ENCODE measurements at regions of chr17 and their contacts with region 1.

Region 1: DNA sequence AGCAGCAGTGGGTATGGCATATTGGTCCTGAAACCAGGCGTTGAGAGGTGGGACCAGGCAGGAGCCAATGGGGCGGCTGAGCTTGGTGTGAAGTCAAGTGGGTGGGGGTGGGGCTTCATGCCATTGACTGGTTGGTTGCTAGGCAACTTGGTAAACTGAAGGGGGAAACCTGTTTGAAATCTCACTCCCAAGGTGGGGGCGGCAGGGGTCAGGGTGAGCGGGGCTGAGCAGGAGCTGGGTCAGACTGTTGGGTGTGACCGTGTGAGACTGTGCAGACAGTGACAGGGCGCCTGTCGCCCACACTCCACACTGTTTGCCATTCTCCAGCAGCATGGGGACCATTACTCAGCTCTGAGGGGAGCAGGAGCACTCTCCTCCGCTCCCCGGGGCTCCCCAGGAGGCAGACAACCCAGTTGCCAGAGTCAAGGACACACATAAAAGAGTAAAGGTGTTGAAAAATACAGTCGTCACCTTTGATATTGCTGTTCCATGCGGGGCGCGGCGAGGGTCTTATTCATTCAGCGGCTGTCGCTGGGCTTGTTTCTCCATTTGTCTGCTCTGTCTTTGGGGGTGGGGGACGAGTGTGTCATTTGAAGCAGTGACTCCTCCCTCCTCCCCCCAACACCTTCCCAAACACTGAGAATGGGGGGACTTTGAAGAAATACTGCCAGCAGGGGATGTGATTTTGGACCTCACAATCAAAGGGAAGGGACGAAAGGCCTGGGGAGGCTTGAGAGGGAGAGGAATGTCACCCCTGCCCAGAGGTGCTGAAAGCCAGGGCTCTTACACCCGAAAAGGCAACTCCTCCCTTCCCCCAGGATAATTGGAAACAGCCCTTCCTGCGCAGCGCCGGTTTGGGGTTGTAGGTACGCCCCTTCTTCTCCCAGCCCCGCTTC is 1.2 kb upstream of the EFNB3 start:
- DNase-seq: peak in 2 of 7 donors; percentile 3 to 72
- H3K4me3 ChIP-seq: no peak overlapping the region
- H3K27ac ChIP-seq: no peak overlapping the region
- H3K4me1 ChIP-seq: peaks cover 9 to 11% of the 10 kb centered on the region in 2 donors
- H3K27me3 ChIP-seq: peaks cover 17% of the 10 kb centered on the region
- CTCF ChIP-seq: no peak
- POLR2A ChIP-seq: no peak

Region 2: GRCh38 chr17:7740481-7741001 is 36.7 kb after region 1 on chr17:
- intact Hi-C with region 1: no loop called
- DNase-seq: peak in 3 of 7 donors; percentile 14 to 32 (median 32)
- H3K4me3 ChIP-seq: no peak overlapping the region
- H3K27ac ChIP-seq: no peak overlapping the region
- H3K4me1 ChIP-seq: no peaks in the 10 kb centered on the region
- H3K27me3 ChIP-seq: peaks cover 10% of the 10 kb centered on the region
- CTCF ChIP-seq: no peak
- POLR2A ChIP-seq: no peak

Region 3: GRCh38 chr17:7774037-7774659 is 70.3 kb after region 1 on chr17:
- intact Hi-C with region 1: loop called in 1 of 2 experiments (anchors 10 kb)
- DNase-seq: peak; percentile 37 to 88 (median 80)
- H3K4me3 ChIP-seq: no peak overlapping the region
- H3K27ac ChIP-seq: no peak overlapping the region
- H3K4me1 ChIP-seq: no peaks in the 10 kb centered on the region
- H3K27me3 ChIP-seq: peaks cover 12% of the 10 kb centered on the region
- CTCF ChIP-seq: no peak
- POLR2A ChIP-seq: no peak

Region 4: DNA sequence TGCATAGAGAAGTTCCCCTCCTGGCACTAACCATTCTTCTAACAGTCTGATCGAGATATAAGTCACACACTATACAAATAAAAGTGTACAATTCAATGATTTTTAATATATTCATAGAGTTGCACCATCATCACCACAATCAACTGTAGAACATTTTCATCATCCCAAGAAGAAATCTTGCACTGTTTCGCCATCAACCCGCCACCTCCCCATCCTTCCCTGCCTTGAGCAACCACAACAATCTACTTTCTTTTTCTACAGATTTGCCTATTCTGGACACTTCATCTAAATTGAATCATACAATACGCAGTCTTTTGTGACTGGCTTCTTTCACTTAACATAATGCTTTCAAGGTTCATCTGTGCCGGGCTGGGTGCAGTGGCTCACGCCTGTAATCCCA is 265.6 kb after region 1 on chr17:
- intact Hi-C with region 1: loop called in 1 of 2 experiments (anchors 10 kb)
- DNase-seq: no peak
- H3K4me3 ChIP-seq: no peak overlapping the region
- H3K27ac ChIP-seq: no peak overlapping the region
- H3K4me1 ChIP-seq: no peaks in the 10 kb centered on the region
- H3K27me3 ChIP-seq: peaks cover 4% of the 10 kb centered on the region
- CTCF ChIP-seq: no peak
- POLR2A ChIP-seq: no peak

Measured in adrenal gland (tissue), 19 donors.